ENCODE measurements at regions of chr3 and their contacts with region 1.

Region 1: GRCh38 chr3:151216641-151217607 is 13.9 kb upstream of the GPR171 start:
- DNase-seq: no peak
- ATAC-seq: no peak
- H3K4me3 ChIP-seq: no peak overlapping the region
- H3K4me3 Mint-ChIP-seq: no peak overlapping the region
- H3K27ac ChIP-seq: no peak overlapping the region
- H3K27ac Mint-ChIP-seq: no peak overlapping the region
- H3K4me1 ChIP-seq: no peaks in the 10 kb centered on the region
- H3K4me1 Mint-ChIP-seq: no peaks in the 10 kb centered on the region
- H3K27me3 ChIP-seq: no peaks in the 10 kb centered on the region
- H3K27me3 Mint-ChIP-seq: no peaks in the 10 kb centered on the region
- CTCF ChIP-seq: no peak

Region 2: GRCh38 chr3:149765762-149766334 is 1451.1 kb before region 1 on chr3:
- CTCF ChIA-PET with region 1: no interaction called
- POLR2A ChIA-PET with region 1: no interaction called
- intact Hi-C with region 1: no loop called
- DNase-seq: peak in 1 of 9 experiments; percentile 21
- ATAC-seq: no peak
- H3K4me3 ChIP-seq: no peak overlapping the region
- H3K4me3 Mint-ChIP-seq: no peak overlapping the region
- H3K27ac ChIP-seq: no peak overlapping the region
- H3K27ac Mint-ChIP-seq: no peak overlapping the region
- H3K4me1 ChIP-seq: no peaks in the 10 kb centered on the region
- H3K4me1 Mint-ChIP-seq: no peaks in the 10 kb centered on the region
- H3K27me3 ChIP-seq: no peaks in the 10 kb centered on the region
- H3K27me3 Mint-ChIP-seq: peaks cover 19% of the 10 kb centered on the region
- CTCF ChIP-seq: no peak

Region 3: GRCh38 chr3:150775091-150775501 is 441.8 kb before region 1 on chr3:
- CTCF ChIA-PET with region 1: no interaction called
- POLR2A ChIA-PET with region 1: no interaction called
- intact Hi-C with region 1: no loop called
- DNase-seq: no peak
- ATAC-seq: no peak
- H3K4me3 ChIP-seq: no peak overlapping the region
- H3K4me3 Mint-ChIP-seq: no peak overlapping the region
- H3K27ac ChIP-seq: no peak overlapping the region
- H3K27ac Mint-ChIP-seq: no peak overlapping the region
- H3K4me1 ChIP-seq: no peaks in the 10 kb centered on the region
- H3K4me1 Mint-ChIP-seq: no peaks in the 10 kb centered on the region
- H3K27me3 ChIP-seq: no peaks in the 10 kb centered on the region
- H3K27me3 Mint-ChIP-seq: peaks cover 4% of the 10 kb centered on the region
- CTCF ChIP-seq: no peak

Region 4: DNA sequence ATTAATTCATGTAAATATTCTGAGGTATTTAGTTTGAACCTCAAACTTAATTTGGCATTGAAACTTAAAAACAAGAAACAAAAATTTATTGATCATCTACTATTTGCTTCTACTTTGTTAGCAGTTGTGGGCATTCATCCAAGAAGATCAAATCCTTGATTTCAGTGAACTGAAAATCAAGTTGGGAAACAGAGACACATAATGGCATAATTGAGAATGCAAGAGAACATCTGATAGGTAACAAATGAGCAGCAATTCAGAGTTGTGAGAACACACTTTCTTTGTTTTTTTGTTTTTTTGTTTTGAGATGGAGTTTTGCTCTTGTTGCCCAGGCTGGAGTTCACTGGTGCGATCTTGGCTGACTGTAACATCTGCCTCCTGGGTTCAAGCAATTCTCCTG is 165.4 kb before region 1 on chr3:
- CTCF ChIA-PET with region 1: no interaction called
- POLR2A ChIA-PET with region 1: no interaction called
- intact Hi-C with region 1: no loop called
- DNase-seq: no peak
- ATAC-seq: no peak
- H3K4me3 ChIP-seq: no peak overlapping the region
- H3K4me3 Mint-ChIP-seq: no peak overlapping the region
- H3K27ac ChIP-seq: no peak overlapping the region
- H3K27ac Mint-ChIP-seq: no peak overlapping the region
- H3K4me1 ChIP-seq: no peaks in the 10 kb centered on the region
- H3K4me1 Mint-ChIP-seq: no peaks in the 10 kb centered on the region
- H3K27me3 ChIP-seq: no peaks in the 10 kb centered on the region
- H3K27me3 Mint-ChIP-seq: peaks cover 22% of the 10 kb centered on the region
- CTCF ChIP-seq: no peak

Region 5: GRCh38 chr3:151203051-151203420 is 13.9 kb before region 1 on chr3 and contains the start of gene GPR171:
- CTCF ChIA-PET with region 1: interaction called, 10 read pairs
- POLR2A ChIA-PET with region 1: interaction called, 6 read pairs
- intact Hi-C with region 1: no loop called
- DNase-seq: peak; percentile 46 to 91 (median 68)
- ATAC-seq: peak; percentile 84
- H3K4me3 ChIP-seq: peak within 1 kb of the TSS; percentile 50 to 59
- H3K4me3 Mint-ChIP-seq: peak within 1 kb of the TSS; percentile 76
- H3K27ac ChIP-seq: peak within 1 kb of the TSS; percentile 36 to 72
- H3K27ac Mint-ChIP-seq: peak within 1 kb of the TSS; percentile 91
- H3K4me1 ChIP-seq: peaks cover 67% of the 10 kb centered on the region
- H3K4me1 Mint-ChIP-seq: peaks cover 81% of the 10 kb centered on the region
- H3K27me3 ChIP-seq: no peaks in the 10 kb centered on the region
- H3K27me3 Mint-ChIP-seq: no peaks in the 10 kb centered on the region
- CTCF ChIP-seq: no peak
- total RNA-seq, gene GPR171: 11.5 to 13.4 TPM